IMR-90 (cell line): ENCODE measurements at regions of chr5 and their contacts with region 1.

Region 1: DNA sequence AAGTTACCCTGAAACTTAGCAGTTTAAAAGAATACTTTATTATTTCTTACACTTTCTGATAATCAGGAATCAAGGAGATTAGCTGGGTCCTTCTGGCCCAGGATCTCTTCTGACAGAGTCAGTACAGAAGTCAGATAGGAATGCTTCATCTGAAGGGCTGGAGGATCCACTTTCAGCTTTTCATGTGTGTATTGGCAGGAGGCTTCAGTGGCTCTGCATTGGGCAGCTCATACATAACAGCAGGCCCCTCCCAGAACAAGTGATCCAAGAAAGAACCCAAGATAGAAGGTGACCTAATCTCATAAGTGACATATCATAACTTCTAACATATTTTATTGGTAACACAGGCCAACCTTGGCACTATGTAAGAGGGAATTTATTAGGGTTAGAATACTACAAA is 258.4 kb downstream of the HCN1 start:
- DNase-seq: no peak
- ATAC-seq: no peak
- H3K4me3 ChIP-seq: no peak overlapping the region
- H3K27ac ChIP-seq: no peak overlapping the region
- H3K4me1 ChIP-seq: no peaks in the 10 kb centered on the region
- H3K27me3 ChIP-seq: no peaks in the 10 kb centered on the region
- CTCF ChIP-seq: no peak
- POLR2A ChIP-seq: no peak
- RAD21 ChIP-seq: no peak

Region 2: DNA sequence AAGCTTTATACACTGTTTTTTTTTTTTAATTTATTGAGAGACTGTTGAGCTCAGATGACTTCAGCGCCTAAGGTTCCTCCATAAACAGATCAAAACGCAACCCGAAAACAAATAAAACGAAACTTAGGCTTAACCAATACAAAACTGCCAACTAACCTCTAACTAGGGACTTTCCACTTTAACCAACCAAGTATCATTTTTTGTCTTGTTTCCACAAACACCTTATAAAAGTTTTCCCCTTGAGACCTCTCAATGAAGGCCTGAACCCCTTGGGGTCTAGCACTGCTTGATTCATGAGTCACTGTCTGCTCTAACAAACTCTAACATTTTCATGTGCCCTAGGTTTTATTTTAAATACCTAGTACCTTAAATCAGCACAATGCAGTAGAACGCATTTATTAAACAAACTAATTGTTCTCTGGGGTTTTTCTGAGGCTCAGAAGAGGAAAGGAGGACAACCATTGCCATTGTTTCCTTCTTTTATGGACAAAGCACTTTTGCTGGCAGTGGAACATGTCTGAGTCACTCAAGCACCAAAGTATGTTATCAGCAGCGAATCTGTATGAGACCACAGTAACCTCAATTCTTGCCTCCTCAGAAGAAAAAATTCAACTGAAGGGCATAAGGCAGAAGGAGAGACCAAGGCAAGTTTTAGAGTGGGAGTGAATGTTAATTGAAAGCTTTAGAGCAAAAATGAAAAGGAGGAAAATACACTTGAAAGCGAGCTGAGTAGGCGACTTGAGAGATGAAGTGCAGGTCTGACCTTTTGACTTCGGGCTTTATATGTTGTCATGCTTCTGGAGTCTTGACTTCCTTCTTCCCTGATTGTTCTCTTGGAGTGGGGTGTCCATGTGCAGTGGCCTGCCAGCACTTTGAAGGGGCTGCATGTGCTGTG is 356.1 kb after region 1 on chr5:
- CTCF ChIA-PET with region 1: no interaction called
- POLR2A ChIA-PET with region 1: no interaction called
- dilution Hi-C with region 1: no loop called
- in situ Hi-C with region 1: no loop called
- intact Hi-C with region 1: loop called (anchors 5 kb)
- DNase-seq: no peak
- ATAC-seq: no peak
- H3K4me3 ChIP-seq: no peak overlapping the region
- H3K27ac ChIP-seq: no peak overlapping the region
- H3K4me1 ChIP-seq: no peaks in the 10 kb centered on the region
- H3K27me3 ChIP-seq: no peaks in the 10 kb centered on the region
- CTCF ChIP-seq: no peak
- POLR2A ChIP-seq: no peak
- RAD21 ChIP-seq: no peak